PC-9 (cell line): ENCODE measurements at regions of chr19 and their contacts with region 1.

Region 1: GRCh38 chr19:4208385-4209094 is 20.8 kb upstream of the EBI3 start:
- DNase-seq: peak; percentile 47 to 74
- H3K4me3 ChIP-seq: 0 out of 2 replicates have a peak overlapping the region, but pooled peaks have one; percentile 16
- H3K27ac ChIP-seq: peak overlapping the region; percentile 81
- H3K4me1 ChIP-seq: peaks cover 9% of the 10 kb centered on the region
- H3K27me3 ChIP-seq: no peaks in the 10 kb centered on the region
- CTCF ChIP-seq: peak; percentile 72

Region 2: GRCh38 chr19:3324321-3324856 is 884.2 kb before region 1 on chr19:
- CTCF ChIA-PET with region 1: no interaction called
- POLR2A ChIA-PET with region 1: no interaction called
- intact Hi-C with region 1: loop called (anchors 10 kb)
- DNase-seq: peak in 1 of 2 experiments; percentile 46
- H3K4me3 ChIP-seq: no peak overlapping the region
- H3K27ac ChIP-seq: no peak overlapping the region
- H3K4me1 ChIP-seq: no peaks in the 10 kb centered on the region
- H3K27me3 ChIP-seq: no peaks in the 10 kb centered on the region
- CTCF ChIP-seq: peak; percentile 81

Region 3: DNA sequence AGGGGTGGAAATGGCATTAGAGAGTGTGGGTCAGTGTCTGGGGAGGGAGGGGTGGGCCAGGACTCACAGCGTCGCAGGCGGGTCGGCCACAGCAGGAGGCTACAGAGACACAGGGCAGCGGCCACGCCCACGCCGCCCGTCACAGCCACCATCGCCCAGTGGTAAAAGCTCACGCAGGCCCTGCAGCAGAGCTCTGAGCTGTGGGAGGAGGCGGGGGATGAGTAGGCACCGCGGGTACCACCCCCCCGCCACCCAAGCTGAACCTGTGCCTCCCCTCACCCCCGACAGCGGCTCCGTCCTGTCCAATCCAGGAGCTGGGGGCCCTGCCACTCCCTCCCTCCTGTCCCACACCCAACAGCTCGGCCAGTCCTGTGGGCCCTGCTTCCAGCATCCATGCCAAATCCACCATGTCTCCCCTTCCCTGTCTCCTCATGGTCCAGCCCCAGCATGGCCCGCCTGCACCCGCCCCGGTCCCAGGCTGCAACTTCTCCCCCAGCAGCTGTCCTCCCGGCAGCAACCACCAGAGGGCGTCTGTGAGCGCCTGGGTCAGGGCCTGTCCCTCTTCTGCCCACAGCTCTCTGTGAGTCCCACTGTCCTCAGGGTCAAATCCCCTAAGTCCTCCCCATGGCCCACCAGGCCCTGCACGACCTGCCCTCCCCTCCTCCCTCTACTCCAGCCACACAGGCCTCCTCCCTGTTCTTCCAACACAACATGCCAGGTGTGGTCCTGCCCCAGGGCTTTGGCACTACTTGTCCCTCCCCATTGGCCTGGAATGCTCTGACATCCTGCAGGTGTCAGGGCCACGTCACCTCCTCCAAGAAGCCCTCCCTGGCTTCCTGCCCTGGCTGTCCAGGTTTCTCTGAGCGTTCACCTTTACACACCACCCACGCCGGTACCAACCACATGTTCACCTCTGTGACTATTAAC is 663.5 kb before region 1 on chr19:
- CTCF ChIA-PET with region 1: no interaction called
- POLR2A ChIA-PET with region 1: no interaction called
- intact Hi-C with region 1: loop called (anchors 5 kb)
- DNase-seq: peak; percentile 48 to 68
- H3K4me3 ChIP-seq: no peak overlapping the region
- H3K27ac ChIP-seq: no peak overlapping the region
- H3K4me1 ChIP-seq: no peaks in the 10 kb centered on the region
- H3K27me3 ChIP-seq: no peaks in the 10 kb centered on the region
- CTCF ChIP-seq: peak; percentile 86

Region 4: GRCh38 chr19:3665681-3666544 is 542.6 kb before region 1 on chr19:
- CTCF ChIA-PET with region 1: no interaction called
- POLR2A ChIA-PET with region 1: no interaction called
- intact Hi-C with region 1: loop called (anchors 5 kb)
- DNase-seq: peak in 1 of 2 experiments; percentile 53
- H3K4me3 ChIP-seq: no peak overlapping the region
- H3K27ac ChIP-seq: no peak overlapping the region
- H3K4me1 ChIP-seq: no peaks in the 10 kb centered on the region
- H3K27me3 ChIP-seq: no peaks in the 10 kb centered on the region
- CTCF ChIP-seq: peak; percentile 93

Region 5: DNA sequence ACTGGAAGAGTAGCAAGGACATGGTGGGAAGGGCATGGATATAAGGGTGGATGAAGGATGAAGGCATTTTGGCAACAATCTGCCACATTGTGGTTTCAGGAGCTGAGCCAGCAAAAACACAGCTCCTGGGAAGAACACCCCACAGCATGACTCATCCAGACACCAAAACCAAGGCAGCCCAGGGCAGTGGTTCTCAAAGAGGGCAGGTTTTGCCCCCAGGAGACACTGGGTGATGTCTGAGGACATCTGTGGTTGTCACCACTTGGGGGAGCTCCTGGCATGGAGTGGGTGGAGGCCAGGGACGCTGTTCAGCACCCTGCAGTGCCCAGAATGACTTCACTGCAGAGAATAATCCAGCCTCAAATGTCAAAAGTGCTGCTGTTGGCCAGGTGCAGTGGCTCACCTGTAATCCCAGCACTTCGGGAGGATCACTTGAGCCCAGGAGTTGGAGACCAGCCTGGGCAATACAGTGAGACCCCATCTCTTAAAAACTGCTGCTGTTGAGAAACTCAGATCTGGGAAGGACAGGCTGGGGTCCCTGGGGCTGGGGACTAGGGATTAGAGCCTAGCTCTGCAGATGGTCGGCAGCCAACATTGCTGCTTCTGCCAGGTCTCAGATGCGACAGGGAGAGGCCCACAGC is 355.8 kb before region 1 on chr19:
- CTCF ChIA-PET with region 1: no interaction called
- POLR2A ChIA-PET with region 1: no interaction called
- intact Hi-C with region 1: loop called (anchors 2 kb)
- DNase-seq: peak; percentile 76 to 85
- H3K4me3 ChIP-seq: no peak overlapping the region
- H3K27ac ChIP-seq: no peak overlapping the region
- H3K4me1 ChIP-seq: 0 out of 2 replicates have a peak, but pooled peaks cover 6% of the 10 kb centered on the region
- H3K27me3 ChIP-seq: no peaks in the 10 kb centered on the region
- CTCF ChIP-seq: peak; percentile 69

Region 6: GRCh38 chr19:4007021-4007835 is 201.3 kb before region 1 on chr19 and contains the start of gene PIAS4:
- CTCF ChIA-PET with region 1: interaction called, 19 read pairs
- POLR2A ChIA-PET with region 1: no interaction called
- intact Hi-C with region 1: no loop called
- DNase-seq: peak; percentile 72 to 91
- H3K4me3 ChIP-seq: peak within 1 kb of the TSS; percentile 90
- H3K27ac ChIP-seq: no peak within 1 kb of the TSS
- H3K4me1 ChIP-seq: no peaks in the 10 kb centered on the region
- H3K27me3 ChIP-seq: no peaks in the 10 kb centered on the region
- CTCF ChIP-seq: no peak
- total RNA-seq, gene PIAS4: 25.5 and 26.5 TPM in 2 replicates

Region 7: GRCh38 chr19:4304530-4305252 is 96.2 kb after region 1 on chr19 and contains the start of gene FSD1:
- CTCF ChIA-PET with region 1: no interaction called
- POLR2A ChIA-PET with region 1: no interaction called
- intact Hi-C with region 1: no loop called
- DNase-seq: no peak
- H3K4me3 ChIP-seq: no peak within 1 kb of the TSS
- H3K27ac ChIP-seq: no peak within 1 kb of the TSS
- H3K4me1 ChIP-seq: no peaks in the 10 kb centered on the region
- H3K27me3 ChIP-seq: no peaks in the 10 kb centered on the region
- CTCF ChIP-seq: no peak
- total RNA-seq, gene FSD1: not detected in 2 replicates